ENCODE measurements at regions of chr1 and their contacts with region 1.

Region 1: DNA sequence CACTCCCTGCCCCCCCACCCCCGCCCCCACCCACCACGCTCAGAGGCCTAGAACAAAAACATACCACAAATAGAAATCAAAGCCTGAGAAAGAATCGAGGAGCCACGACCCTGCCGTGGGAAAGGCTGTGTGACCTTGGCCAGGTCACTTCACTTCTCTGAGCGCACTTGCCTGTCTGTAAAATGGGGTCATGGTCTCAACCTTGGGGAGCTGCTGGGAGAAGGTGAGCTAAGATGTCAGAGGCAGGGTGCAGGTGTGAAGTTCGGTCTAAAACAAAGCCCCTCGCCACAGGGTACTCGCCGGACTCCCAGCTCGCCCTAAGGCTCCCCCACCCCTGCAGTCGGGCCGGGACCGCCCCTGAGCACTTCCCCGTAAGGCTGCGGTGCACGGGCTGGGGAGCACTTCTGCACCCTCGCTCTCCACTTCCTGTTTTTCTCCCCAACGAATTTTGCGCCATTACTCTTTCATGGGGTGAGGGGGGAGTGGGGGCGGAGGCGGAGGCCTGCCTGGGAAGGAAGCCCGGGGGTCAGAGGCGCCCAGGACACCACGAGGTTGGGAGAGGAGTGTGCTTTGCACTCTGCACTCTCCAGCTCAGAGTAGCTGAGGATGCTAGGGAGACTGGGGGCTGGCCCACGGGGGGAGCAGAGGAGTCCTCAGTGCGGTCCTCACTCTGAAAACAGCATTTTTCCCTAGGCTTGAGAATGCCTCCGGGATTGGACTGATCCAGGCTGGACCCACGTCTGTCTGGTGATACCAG is 21.9 kb upstream of the PIK3CD start:
- DNase-seq: peak; percentile 95
- H3K4me3 Mint-ChIP-seq: peak overlapping the region; percentile 95
- H3K27ac Mint-ChIP-seq: peak overlapping the region; percentile 93
- H3K4me1 Mint-ChIP-seq: peaks cover 52% of the 10 kb centered on the region
- H3K27me3 Mint-ChIP-seq: no peaks in the 10 kb centered on the region

Region 2: GRCh38 chr1:9670085-9670484 is 40.5 kb after region 1 on chr1:
- intact Hi-C with region 1: loop called (anchors 1 kb)
- DNase-seq: no peak
- H3K4me3 Mint-ChIP-seq: no peak overlapping the region
- H3K27ac Mint-ChIP-seq: peak overlapping the region; percentile 91
- H3K4me1 Mint-ChIP-seq: peaks cover 37% of the 10 kb centered on the region
- H3K27me3 Mint-ChIP-seq: no peaks in the 10 kb centered on the region

Region 3: DNA sequence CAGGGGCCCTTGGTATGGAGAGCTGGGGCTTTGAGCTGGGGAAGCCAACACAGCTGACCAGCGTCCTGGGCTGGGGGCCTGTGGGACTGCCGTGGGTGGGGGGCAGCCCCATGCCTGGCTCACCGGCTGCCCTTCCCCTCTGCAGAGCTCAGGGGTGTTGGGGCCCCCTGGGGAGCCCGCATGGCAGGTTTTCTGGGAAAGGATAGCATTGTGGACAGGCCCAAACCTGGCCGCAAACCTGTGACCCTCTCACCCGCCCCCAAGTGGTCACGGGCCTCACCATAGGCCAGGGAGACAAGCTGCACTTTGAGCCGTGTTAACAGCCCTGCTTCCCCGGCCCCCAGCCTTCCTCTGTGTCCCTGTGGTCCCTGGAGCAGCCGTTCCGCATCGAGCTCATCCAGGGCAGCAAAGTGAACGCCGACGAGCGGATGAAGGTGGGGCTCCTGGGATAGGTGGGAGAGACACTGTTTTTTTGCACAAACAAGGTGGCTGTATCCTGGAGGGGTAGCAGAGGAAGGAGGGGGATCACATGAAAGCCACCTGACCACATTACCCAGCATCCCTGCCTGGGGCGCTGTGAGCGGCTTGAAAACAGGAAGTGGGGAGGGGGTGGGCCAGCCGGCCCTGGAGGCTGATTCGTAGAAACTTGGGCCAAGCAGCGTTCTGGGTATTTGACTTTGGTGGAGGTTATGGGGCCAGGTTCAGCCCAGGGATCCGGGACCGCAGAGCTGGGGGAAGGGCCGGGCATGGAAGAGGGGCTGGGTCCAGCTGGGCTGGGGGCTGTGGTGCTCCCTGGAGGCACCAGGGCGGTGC is 87.8 kb after region 1 on chr1:
- intact Hi-C with region 1: loop called (anchors 1 kb)
- DNase-seq: peak; percentile 96
- H3K4me3 Mint-ChIP-seq: peak overlapping the region; percentile 82
- H3K27ac Mint-ChIP-seq: peak overlapping the region; percentile 92
- H3K4me1 Mint-ChIP-seq: peaks cover 57% of the 10 kb centered on the region
- H3K27me3 Mint-ChIP-seq: no peaks in the 10 kb centered on the region

Region 4: GRCh38 chr1:9753121-9753531 is 123.5 kb after region 1 on chr1:
- intact Hi-C with region 1: no loop called
- DNase-seq: no peak
- H3K4me3 Mint-ChIP-seq: no peak overlapping the region
- H3K27ac Mint-ChIP-seq: no peak overlapping the region
- H3K4me1 Mint-ChIP-seq: no peaks in the 10 kb centered on the region
- H3K27me3 Mint-ChIP-seq: no peaks in the 10 kb centered on the region

Region 5: DNA sequence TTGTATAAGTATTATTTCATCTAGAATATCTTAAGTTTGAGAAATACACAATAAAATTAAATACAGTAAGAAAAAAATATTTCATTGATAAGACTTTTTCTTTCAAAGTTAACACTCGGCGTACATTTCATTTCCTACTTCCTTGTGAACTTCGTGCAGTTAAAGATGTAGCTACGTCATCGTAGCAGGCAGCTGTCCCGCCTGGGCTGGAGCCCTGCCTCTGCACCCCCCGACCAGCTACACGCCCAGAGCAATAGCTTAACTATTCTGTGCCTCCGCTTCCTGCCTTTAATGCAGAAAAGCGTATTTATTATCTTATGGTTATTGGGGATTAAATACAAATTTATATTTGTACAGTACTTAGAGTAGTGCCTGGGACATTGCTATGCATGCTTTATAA is 140.7 kb after region 1 on chr1:
- intact Hi-C with region 1: no loop called
- DNase-seq: no peak
- H3K4me3 Mint-ChIP-seq: no peak overlapping the region
- H3K27ac Mint-ChIP-seq: no peak overlapping the region
- H3K4me1 Mint-ChIP-seq: peaks cover 4% of the 10 kb centered on the region
- H3K27me3 Mint-ChIP-seq: no peaks in the 10 kb centered on the region

Region 6: GRCh38 chr1:9784508-9785133 is 155.0 kb after region 1 on chr1:
- intact Hi-C with region 1: loop called (anchors 5 kb)
- DNase-seq: peak; percentile 90
- H3K4me3 Mint-ChIP-seq: no peak overlapping the region
- H3K27ac Mint-ChIP-seq: no peak overlapping the region
- H3K4me1 Mint-ChIP-seq: peaks cover 28% of the 10 kb centered on the region
- H3K27me3 Mint-ChIP-seq: no peaks in the 10 kb centered on the region

Region 7: DNA sequence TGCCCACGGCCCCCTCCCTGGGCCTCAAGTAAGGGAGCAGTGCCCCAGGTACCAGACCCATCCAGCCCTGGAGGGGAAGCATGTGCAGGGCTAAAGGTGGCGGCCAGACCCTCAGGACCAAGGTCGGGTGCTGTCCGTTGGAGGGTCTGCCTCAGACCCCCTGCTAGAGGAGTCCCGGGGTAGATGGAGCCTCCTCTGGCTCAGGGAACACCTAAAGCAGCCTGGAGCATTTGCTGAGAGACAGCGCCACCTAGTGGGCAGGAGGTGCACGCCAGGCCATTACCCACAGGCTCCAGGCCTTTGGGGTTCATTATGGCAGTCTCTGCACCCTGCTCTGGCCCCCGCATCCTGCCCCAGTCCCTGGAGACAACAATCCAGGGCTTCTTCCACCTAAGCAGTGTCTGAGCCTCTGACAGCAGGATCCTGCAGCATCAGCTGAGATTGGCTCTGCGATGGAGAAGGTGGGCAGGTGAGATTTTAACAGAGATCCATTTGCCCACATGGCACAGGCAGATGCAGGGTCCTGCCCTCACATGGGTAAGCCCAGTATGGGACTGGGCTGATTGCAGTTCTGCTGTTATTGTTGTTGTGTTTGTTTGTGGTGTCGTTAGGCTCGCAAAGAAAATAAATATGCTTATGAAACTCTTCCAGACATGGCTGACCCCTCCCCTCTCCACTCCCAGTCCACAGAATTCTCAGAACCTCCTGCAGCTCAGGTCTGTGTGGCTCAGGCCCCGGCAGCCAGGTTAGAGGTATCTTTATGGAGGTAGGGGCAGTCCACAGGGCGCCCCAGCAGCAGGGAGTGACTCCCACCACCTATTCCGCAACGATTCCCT is 238.0 kb after region 1 on chr1:
- intact Hi-C with region 1: loop called (anchors 1 kb)
- DNase-seq: peak; percentile 96
- H3K4me3 Mint-ChIP-seq: no peak overlapping the region
- H3K27ac Mint-ChIP-seq: no peak overlapping the region
- H3K4me1 Mint-ChIP-seq: peaks cover 4% of the 10 kb centered on the region
- H3K27me3 Mint-ChIP-seq: peaks cover 2% of the 10 kb centered on the region

Measured in activated CD4-positive, alpha-beta T cell treated with anti-CD3 and anti-CD28 coated beads, Interleukin-2, amount 10 ng/mL, durations not matched to agents 24 days and 14 days (primary cell).